ENCODE measurements at regions of chr18 and their contacts with region 1.

Region 1: GRCh38 chr18:25832001-25832604 is 258.3 kb downstream of the SS18 start:
- DNase-seq: no peak
- H3K4me3 ChIP-seq: no peak overlapping the region
- H3K27me3 ChIP-seq: no peaks in the 10 kb centered on the region; the same call in none of the 2 replicates
- CTCF ChIP-seq: peak; percentile 93

Region 2: DNA sequence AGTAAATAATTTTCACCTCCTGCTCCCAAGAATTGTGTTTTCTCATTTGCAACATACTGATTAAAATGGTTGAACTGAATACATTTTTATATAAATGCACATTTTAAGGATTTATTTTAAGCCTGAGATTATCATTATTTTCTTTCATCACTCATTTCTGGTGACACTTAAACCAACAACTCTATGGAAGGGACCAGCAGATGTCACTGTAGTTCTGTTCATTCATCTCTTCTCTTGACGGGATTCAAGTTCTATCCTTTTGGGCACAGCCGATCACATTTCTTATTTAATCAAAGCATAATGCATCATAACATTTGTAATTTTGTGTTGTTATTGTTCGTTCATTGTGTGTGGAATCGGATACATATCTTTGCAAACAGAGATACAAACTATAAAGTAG is 953.8 kb before region 1 on chr18:
- CTCF ChIA-PET with region 1: interaction called, 20 read pairs
- POLR2A ChIA-PET with region 1: no interaction called
- DNase-seq: no peak
- H3K4me3 ChIP-seq: no peak overlapping the region
- H3K27me3 ChIP-seq: no peaks in the 10 kb centered on the region
- CTCF ChIP-seq: peak; percentile 50

Region 3: DNA sequence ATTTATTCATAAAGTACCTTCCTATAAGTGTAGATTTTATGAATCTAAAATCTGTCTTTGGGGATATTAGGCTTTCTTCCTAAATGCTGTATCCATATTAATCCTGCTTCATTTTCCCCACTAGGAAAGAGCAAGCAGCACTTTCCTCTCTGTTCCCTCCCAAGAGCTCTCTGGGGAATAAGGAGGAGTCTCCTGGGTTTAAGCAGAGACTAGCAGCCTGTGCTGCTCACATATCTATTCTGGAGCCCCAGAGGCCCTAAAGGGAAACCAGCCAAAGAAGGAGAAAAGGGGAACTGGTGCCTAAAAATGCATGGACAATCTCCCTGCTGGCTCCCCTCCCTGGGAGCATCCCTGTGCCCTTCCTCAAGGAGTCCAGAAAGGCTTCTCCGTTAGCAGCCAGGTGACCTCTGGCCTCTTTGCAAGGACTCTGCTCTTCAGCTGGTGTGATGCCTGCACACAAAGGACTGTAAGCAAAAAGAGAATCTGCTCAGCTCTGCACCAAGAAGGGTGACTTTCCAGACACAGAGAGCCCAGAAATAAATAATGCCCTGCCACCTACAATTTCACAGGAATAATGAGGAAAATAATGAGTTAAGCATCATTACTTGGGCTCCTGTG is 12.2 kb before region 1 on chr18:
- CTCF ChIA-PET with region 1: interaction called, 12 read pairs
- POLR2A ChIA-PET with region 1: no interaction called
- DNase-seq: no peak
- H3K4me3 ChIP-seq: no peak overlapping the region
- H3K27me3 ChIP-seq: no peaks in the 10 kb centered on the region; the same call in 1 of the 2 replicates
- CTCF ChIP-seq: no peak

Region 4: DNA sequence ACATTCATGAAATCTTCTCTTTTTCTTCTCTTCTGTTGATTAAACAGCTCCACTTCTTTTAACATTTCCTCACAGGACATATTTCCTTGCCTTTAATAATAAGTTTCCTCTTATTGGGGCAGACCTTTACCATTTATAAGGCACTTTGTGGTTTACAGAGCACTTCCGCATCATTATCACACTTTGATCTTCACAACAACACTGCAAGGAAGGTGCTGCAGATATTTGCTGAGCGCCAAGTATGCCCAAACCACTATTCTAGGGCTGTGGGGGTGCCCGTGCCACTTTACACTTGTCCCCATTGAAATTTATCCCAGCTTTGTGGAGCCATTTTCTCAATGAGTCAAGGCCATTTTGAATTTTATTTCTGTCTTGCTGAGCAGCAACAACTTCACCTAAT is 11.7 kb after region 1 on chr18:
- CTCF ChIA-PET with region 1: interaction called, 15 read pairs
- POLR2A ChIA-PET with region 1: no interaction called
- DNase-seq: no peak
- H3K4me3 ChIP-seq: no peak overlapping the region
- H3K27me3 ChIP-seq: no peaks in the 10 kb centered on the region; the same call in 1 of the 2 replicates
- CTCF ChIP-seq: no peak